ENCODE measurements at regions of chr4 and their contacts with region 1.

Region 1: GRCh38 chr4:164779811-164780216 is 25.9 kb downstream of the SMIM31 start:
- ATAC-seq: peak in 3 of 8 experiments; percentile 27 to 54 (median 28)
- H3K4me3 ChIP-seq: no peak overlapping the region
- H3K27ac ChIP-seq: no peak overlapping the region
- H3K4me1 ChIP-seq: peaks cover 0 to 4% of the 10 kb centered on the region in 2 donors

Region 2: GRCh38 chr4:164531336-164531735 is 248.5 kb before region 1 on chr4:
- in situ Hi-C with region 1: no loop called
- ATAC-seq: no peak
- H3K4me3 ChIP-seq: no peak overlapping the region
- H3K27ac ChIP-seq: no peak overlapping the region
- H3K4me1 ChIP-seq: peaks cover 20 to 23% of the 10 kb centered on the region in 2 donors

Region 3: GRCh38 chr4:164876700-164877324 is 97.0 kb after region 1 on chr4 and contains the start of gene APELA:
- in situ Hi-C with region 1: loop called in 2 of 9 experiments (anchors 25 kb)
- ATAC-seq: peak; percentile 46 to 95 (median 92)
- H3K4me3 ChIP-seq: peak within 1 kb of the TSS; percentile 5 to 29 (median 23)
- H3K27ac ChIP-seq: peak within 1 kb of the TSS in 1 of 2 donors; percentile 9
- H3K4me1 ChIP-seq: peaks cover 8 to 21% of the 10 kb centered on the region in 2 donors
- total RNA-seq, gene APELA: 10.2 to 62.4 (median 12.8) TPM in 6 of 8 experiments, not detected in the others

Region 4: DNA sequence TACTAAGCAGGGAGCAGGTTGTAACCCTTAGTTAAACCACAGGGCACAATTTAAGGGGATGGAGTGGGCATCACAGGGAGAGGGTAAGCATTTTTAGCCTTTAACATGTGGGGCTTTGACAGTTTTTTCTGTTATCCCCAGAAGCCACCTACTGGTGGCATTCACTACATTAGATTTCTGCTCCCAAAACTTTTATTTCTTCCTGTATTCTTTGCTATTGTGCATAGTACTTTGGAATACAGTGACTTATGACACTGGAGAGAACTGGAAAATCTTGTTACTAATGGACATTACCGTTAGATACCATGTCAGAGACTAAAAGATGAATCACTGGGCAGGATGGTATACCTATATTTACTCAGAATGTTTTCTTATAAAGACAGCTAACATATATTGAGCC is 281.1 kb after region 1 on chr4:
- in situ Hi-C with region 1: loop called in 2 of 9 experiments (anchors 25 kb)
- ATAC-seq: peak in 1 of 8 experiments; percentile 33
- H3K4me3 ChIP-seq: no peak overlapping the region
- H3K27ac ChIP-seq: no peak overlapping the region
- H3K4me1 ChIP-seq: no peaks in the 10 kb centered on the region

Region 5: DNA sequence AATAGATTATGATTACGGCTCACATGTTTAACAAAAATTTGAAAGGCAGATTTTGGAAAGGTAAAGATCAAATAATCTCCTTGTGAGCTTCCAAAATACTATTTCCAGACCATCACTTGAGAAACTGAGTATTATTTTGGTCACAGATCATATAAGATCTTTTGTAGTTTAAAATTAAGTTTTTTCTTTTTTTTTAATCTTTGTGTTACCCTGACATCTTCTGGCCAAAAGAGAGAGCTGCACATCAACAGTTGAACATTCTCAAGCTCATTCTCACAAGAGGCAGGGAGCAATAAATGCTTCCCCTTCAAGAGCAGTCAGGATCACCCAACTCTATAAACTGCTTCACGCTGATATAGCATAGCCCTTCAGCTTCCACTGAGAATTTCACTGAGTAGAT is 317.0 kb after region 1 on chr4:
- in situ Hi-C with region 1: loop called in 3 of 9 experiments (anchors 25 kb)
- ATAC-seq: no peak
- H3K4me3 ChIP-seq: no peak overlapping the region
- H3K27ac ChIP-seq: no peak overlapping the region
- H3K4me1 ChIP-seq: no peaks in the 10 kb centered on the region

Measured in motor neuron (in vitro differentiated cells).